Colonic mucosa (tissue), 4 donors: ENCODE measurements at regions of chr1 and their contacts with region 1.

Region 1: DNA sequence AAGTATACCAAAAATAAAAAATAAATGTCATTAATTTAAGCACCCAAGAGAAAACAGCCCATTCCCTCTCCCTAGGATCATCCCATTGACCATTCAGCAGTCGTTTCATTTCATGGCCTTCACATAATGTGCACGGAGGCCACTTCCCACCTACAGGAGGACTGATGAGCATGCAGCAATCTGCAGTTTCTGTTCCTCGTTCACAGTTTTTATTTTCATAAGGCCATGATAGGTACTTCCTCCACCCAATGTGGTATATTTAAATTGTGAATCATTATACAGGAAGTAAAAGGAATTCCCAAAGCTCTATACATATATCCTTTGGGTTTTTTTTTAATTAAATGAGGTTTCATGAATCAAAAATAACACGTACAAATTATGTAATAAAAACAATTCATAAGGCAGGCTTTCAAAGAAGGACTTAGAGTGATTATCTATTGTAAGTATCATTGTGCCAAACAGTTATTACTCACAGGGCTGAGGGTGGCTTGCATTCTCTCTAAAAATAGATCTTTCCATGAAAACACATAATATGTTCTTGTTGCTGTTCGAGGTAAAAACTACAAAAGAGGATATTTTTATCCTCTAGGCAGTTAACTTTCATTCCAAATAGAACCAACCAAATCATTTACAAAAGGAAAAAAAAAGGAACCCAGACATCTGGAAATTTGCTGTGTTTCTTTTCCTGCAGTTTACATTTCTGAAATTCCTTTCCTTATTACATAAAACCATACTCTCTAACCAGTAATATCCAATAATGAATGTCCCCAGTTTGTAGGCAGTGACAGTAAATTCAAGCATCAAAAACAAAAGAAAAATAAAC is 27.5 kb upstream of the SLC44A3 start:
- DNase-seq: no peak
- H3K4me3 ChIP-seq: no peak overlapping the region
- H3K27ac ChIP-seq: peak overlapping the region; percentile 57
- H3K4me1 ChIP-seq: peaks cover 7% of the 10 kb centered on the region
- H3K27me3 ChIP-seq: no peaks in the 10 kb centered on the region
- CTCF ChIP-seq: peak; percentile 24

Region 2: GRCh38 chr1:94602316-94602715 is 190.4 kb before region 1 on chr1:
- intact Hi-C with region 1: loop called (anchors 10 kb)
- DNase-seq: peak; percentile 57
- H3K4me3 ChIP-seq: no peak overlapping the region
- H3K27ac ChIP-seq: peak overlapping the region; percentile 49
- H3K4me1 ChIP-seq: peaks cover 7% of the 10 kb centered on the region
- H3K27me3 ChIP-seq: no peaks in the 10 kb centered on the region
- CTCF ChIP-seq: no peak

Region 3: DNA sequence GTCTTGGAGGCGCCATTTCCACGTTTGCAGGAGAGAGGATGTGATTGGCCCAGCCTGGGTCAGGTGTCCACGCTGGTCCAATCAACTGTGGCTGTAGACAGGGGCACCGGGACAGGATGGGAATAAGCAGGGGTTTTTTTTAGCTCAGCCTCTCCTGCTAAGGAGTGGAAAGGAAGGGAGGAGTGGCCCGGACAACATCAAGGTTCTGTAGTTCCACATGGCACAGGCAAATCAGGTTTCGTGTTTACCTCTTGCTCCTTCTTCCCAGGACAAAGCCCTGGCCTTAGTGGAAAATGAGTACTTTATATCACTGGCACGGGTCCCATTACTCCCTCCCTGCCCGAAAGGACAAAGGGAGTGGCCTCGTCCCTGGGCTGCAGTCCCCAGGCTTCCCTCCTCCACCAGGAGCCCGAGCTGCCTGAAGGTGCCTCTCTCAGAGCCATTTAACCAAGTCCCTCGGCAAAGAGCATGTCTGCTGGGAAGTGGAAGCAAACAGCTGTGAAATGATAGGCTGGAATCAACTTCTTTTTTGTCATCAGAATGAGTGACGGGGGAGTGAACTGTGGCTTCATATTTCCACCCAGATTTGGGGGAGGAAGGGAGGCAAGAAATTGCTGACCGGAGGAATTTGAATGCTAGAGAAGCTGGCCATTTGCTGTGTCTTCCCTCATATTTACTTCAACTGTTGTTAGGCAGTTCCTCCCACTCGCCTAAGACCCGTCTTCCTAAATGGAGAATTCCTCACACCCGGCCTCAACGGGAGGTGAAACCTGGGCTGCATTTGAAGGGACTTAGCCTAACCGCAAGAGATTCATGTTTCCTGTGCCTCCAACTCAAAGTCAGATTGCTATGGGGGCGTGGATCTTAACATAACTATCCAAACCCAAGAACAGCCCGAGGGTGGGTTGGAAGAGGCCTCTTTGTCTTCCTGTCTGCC is 57.5 kb before region 1 on chr1:
- intact Hi-C with region 1: no loop called
- DNase-seq: peak; percentile 61
- H3K4me3 ChIP-seq: no peak overlapping the region
- H3K27ac ChIP-seq: peak overlapping the region; percentile 49
- H3K4me1 ChIP-seq: peaks cover 9% of the 10 kb centered on the region
- H3K27me3 ChIP-seq: no peaks in the 10 kb centered on the region
- CTCF ChIP-seq: no peak

Region 4: GRCh38 chr1:94854458-94855306 is 62.0 kb after region 1 on chr1:
- intact Hi-C with region 1: no loop called
- DNase-seq: peak; percentile 92
- H3K4me3 ChIP-seq: peak overlapping the region; percentile 23
- H3K27ac ChIP-seq: peak overlapping the region; percentile 57
- H3K4me1 ChIP-seq: peaks cover 7% of the 10 kb centered on the region
- H3K27me3 ChIP-seq: no peaks in the 10 kb centered on the region
- CTCF ChIP-seq: peak; percentile 57